Activated naive CD4-positive, alpha-beta T cell treated with anti-CD3 and anti-CD28 coated beads for 36 hours (primary cell): ENCODE measurements at regions of chrX and their contacts with region 1.

Region 1: DNA sequence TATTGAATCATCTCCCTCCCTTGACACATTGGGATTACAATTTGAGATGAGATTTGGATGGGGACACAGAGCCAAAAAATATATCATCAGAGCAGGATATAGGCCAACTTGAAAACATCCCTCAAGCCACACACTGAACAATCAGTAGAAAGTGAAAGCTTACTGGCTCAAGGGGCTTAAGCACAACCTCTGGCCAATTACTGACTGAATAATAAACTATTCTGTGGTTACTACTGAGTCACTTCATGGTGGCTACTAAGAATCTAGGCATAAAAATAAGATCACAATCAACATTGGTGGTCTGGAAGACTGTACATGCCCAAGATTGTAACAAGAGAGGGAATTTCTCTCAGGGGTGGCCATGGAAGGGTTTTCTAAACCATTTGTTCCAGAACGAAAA is 27.4 kb upstream of the GPR174 start:
- DNase-seq: no peak
- H3K4me3 Mint-ChIP-seq: peak overlapping the region; percentile 52
- H3K27ac Mint-ChIP-seq: no peak overlapping the region
- H3K4me1 Mint-ChIP-seq: peaks cover 46% of the 10 kb centered on the region
- H3K27me3 Mint-ChIP-seq: no peaks in the 10 kb centered on the region

Region 2: DNA sequence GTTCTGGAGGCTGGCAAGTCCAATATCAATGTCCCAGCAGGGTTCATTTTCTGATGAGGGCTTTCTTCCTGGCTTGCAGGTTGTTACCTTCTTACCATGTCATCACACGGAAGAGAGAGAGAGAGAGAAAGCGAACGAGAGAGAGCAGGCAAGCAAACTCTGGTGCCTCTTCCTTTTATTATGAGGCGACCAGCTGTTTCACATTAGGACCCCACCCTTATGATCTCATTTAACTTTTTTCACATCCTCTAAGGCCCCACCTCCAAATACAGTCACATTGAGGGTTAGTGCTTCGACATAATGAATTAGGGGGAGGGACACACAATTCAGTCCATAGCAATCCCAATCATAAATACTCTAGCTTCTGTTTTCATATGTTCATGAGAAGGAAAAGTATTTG is 16.8 kb after region 1 on chrX:
- CTCF ChIA-PET with region 1: interaction called, 4 read pairs
- intact Hi-C with region 1: loop called (anchors 2 kb)
- DNase-seq: peak; percentile 15
- H3K4me3 Mint-ChIP-seq: peak overlapping the region; percentile 50
- H3K27ac Mint-ChIP-seq: no peak overlapping the region
- H3K4me1 Mint-ChIP-seq: peaks cover 28% of the 10 kb centered on the region
- H3K27me3 Mint-ChIP-seq: no peaks in the 10 kb centered on the region

Region 3: DNA sequence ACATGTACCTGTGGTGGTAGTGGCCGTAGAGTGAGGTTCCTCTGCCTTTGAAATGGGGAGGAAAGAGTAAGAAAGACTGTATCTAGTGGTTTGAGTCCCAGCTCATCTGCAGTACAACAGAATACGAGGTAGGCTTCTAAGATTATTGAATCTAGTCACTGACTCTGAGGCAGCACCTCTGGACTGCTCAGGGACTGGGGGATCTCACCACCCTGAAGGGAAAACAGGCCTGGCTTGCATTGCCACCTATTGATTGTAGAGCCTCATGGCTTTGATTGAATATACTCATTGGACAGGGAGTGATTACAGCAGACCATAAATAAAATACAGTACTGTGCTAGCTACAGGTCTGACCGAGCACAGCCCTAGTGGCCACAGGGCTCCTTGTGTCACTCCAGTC is 77.9 kb after region 1 on chrX:
- CTCF ChIA-PET with region 1: no interaction called
- intact Hi-C with region 1: no loop called
- DNase-seq: peak; percentile 27
- H3K4me3 Mint-ChIP-seq: no peak overlapping the region
- H3K27ac Mint-ChIP-seq: no peak overlapping the region
- H3K4me1 Mint-ChIP-seq: peaks cover 17% of the 10 kb centered on the region
- H3K27me3 Mint-ChIP-seq: no peaks in the 10 kb centered on the region